Dorsolateral prefrontal cortex (tissue), 120 donors: ENCODE measurements at regions of chr10 and their contacts with region 1.

Region 1: DNA sequence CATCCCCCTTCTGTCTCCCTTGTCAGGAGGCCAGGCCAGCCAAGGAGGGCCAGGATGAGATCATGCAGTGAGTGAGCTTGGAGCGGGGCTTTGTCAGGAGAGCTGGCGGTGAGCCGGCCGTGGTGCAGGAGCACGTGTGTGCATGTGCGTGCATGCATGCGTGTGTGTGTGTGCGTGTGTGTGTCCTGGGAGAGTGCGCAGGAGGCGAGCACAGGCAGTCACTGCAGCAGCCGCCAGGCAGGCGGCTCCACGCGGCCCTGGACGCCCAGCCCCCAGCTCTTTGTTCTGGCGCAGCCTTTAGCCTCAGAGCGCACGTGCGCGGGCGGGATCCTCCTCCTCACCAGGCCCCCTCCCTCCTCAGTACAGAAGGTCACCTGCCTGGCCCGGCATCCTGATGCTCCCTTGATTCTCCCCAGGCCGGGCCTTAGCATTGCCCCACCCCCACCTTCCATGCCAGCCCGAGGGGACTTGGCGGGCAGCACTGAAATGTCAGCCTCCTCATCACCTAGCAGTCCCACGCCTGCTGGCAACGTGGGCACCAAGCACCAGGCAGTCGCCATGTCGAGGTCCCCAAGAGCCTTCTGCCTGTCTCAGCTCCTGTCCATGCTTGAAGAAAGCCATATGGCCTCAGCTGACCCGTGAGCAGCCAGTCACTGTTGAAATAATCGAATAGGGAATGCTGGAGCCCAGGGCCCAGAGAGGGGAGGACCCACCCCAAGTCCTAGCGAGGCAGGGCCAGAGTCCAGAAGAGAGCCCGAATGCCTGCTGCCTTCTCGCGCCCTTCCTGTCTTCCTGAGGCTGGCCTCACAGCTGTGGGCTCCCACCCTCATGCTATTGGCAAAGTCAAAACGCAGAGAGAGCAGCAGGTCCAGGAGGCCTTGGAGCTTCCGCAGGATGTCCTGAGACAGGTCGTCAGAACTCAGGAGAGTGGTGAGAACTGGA is 125.9 kb upstream of the PPIF start:
- DNase-seq: peak; percentile 57 to 84 (median 76)
- H3K4me3 ChIP-seq: peak overlapping the region in 24 of 59 donors; percentile 3 to 44 (median 22)
- H3K27ac ChIP-seq: peak overlapping the region; percentile 1 to 91 (median 83)
- H3K27me3 ChIP-seq: no peaks in the 10 kb centered on the region
- CTCF ChIP-seq: peak in 32 of 56 donors; percentile 7 to 51 (median 32)

Region 2: DNA sequence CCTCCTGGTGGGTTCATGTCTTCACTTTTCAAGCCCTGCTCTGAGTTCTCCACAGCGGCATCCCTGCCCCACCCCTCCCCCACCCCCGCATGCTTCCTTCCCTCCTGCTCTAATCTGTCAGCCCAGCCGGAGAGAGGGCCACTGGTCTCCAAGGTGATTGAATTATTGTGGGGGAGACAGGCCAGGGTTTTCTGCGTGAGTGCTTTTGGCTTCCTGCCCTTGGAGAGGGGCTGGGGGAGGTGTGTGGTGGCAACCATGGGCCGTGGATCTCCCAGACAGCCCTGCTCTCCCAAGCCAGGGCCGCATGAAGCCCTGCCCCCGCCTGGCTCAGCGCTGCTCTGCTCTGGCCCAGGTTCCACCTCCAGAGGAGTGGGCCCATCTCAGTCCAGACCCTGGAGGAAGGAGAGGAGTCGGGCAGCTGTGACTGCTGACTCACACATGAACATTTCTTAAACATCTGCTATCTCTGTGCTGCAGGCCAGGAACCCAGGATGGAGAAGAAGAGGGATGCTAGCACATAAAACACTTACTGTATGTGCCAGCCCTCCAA is 42.7 kb before region 1 on chr10:
- intact Hi-C with region 1: no loop called
- DNase-seq: peak in 2 of 10 donors; percentile 37 to 65
- H3K4me3 ChIP-seq: no peak overlapping the region
- H3K27ac ChIP-seq: peak overlapping the region in 39 of 59 donors; percentile 3 to 81 (median 50)
- H3K27me3 ChIP-seq: no peaks in the 10 kb centered on the region
- CTCF ChIP-seq: no peak

Region 3: GRCh38 chr10:79242620-79243152 is 21.3 kb after region 1 on chr10:
- intact Hi-C with region 1: loop called (anchors 2 kb)
- DNase-seq: peak in 7 of 10 donors; percentile 42 to 86 (median 71)
- H3K4me3 ChIP-seq: peak overlapping the region; percentile 48 to 80 (median 64)
- H3K27ac ChIP-seq: peak overlapping the region in 57 of 59 donors; percentile 48 to 97 (median 90)
- H3K27me3 ChIP-seq: no peaks in the 10 kb centered on the region
- CTCF ChIP-seq: peak in 1 of 56 donors; percentile 32